ENCODE measurements at regions of chr2 and their contacts with region 1.

Region 1: DNA sequence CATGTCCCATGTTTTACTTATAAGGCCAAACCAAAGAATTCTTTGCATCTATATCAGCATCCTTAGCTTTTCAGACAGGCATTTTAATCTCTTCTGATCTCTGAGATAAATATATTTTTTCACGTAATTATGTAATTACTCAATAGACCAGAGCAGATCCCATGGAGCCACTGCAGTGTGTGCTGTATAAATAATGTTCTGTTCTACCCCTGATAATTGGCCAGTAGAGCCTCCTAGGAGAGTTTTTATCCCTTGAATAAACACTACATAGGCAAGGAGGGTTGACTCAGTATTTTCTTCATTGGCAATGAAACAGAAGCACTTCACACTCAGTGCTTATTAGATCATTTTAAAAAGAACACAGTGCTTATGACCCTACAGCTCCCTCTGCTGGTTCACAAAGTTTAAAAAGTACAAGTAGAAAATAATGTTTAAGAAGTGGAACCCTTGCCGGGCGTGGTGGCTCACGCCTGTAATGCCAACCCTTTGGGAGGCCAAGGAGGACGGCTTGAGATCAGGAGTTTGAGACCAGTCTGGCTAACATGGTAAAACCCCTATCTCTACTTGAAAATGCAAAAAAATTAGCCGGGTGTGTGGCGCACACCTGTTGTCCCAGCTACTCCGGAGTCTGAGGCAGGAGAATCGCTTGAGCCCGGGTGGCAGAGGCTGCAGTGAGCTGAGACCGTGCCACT is 91.9 kb downstream of the PPP1R1C start:
- DNase-seq: no peak
- ATAC-seq: peak; percentile 83
- H3K4me3 ChIP-seq: no peak overlapping the region
- H3K27ac ChIP-seq: no peak overlapping the region
- H3K4me1 ChIP-seq: no peaks in the 10 kb centered on the region
- H3K27me3 ChIP-seq: no peaks in the 10 kb centered on the region; a peak in 1 of 4 replicates
- CTCF ChIP-seq: peak; percentile 40 to 59 (median 58); a peak in 5 of 6 replicates
- EP300 ChIP-seq: no peak
- POLR2A ChIP-seq: no peak
- RAD21 ChIP-seq: peak; percentile 86

Region 2: DNA sequence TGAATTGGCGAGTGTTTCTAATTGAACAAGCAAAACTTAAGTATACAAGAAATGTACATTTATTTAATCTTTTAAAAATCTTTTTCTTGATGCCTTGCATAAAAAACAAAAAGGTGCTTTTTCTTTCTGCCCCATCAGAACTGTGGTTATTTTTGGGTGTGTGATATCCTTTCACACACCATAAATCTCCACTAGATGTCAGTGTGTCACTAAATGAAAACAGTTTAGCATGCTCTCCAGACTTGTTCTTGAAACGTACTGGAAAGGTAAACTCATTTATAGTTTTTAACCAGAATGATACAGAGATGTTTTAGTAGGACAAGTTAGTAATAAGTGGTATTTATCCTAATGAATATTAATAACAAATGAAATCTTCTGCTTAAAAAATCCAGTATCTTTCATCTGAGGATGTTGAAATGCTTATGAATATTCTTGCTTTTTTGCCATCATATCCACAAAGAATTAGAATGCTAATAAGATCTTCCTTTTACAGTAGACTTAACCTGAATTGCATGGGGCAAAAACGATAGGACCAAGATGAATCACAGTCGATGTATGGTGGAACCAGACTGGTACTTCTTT is 1000.4 kb before region 1 on chr2:
- CTCF ChIA-PET with region 1: no interaction called
- POLR2A ChIA-PET with region 1: no interaction called
- RAD21 ChIA-PET with region 1: no interaction called
- SMC1A ChIA-PET with region 1: no interaction called
- in situ Hi-C with region 1: no loop called
- intact Hi-C with region 1: loop called (anchors 5 kb)
- DNase-seq: peak; percentile 16
- ATAC-seq: peak; percentile 94
- H3K4me3 ChIP-seq: no peak overlapping the region
- H3K27ac ChIP-seq: no peak overlapping the region
- H3K4me1 ChIP-seq: no peaks in the 10 kb centered on the region
- H3K27me3 ChIP-seq: no peaks in the 10 kb centered on the region
- CTCF ChIP-seq: peak; percentile 60 to 71 (median 65)
- EP300 ChIP-seq: no peak
- POLR2A ChIP-seq: no peak
- RAD21 ChIP-seq: peak; percentile 93

Region 3: GRCh38 chr2:181742922-181743722 is 334.5 kb before region 1 on chr2:
- CTCF ChIA-PET with region 1: interaction called, 29 read pairs
- POLR2A ChIA-PET with region 1: no interaction called
- RAD21 ChIA-PET with region 1: interaction called, 16 read pairs
- SMC1A ChIA-PET with region 1: interaction called, 23 read pairs
- in situ Hi-C with region 1: loop called (anchors 5 kb)
- intact Hi-C with region 1: loop called (anchors 1 kb)
- DNase-seq: peak; percentile 17
- ATAC-seq: peak; percentile 58
- H3K4me3 ChIP-seq: no peak overlapping the region
- H3K27ac ChIP-seq: no peak overlapping the region
- H3K4me1 ChIP-seq: no peaks in the 10 kb centered on the region
- H3K27me3 ChIP-seq: no peaks in the 10 kb centered on the region
- CTCF ChIP-seq: peak; percentile 47 to 72 (median 53); a peak in 5 of 6 replicates
- EP300 ChIP-seq: no peak
- POLR2A ChIP-seq: no peak
- RAD21 ChIP-seq: peak; percentile 83

Region 4: GRCh38 chr2:181953881-181954537 is 123.6 kb before region 1 on chr2:
- CTCF ChIA-PET with region 1: interaction called, 35 read pairs
- POLR2A ChIA-PET with region 1: no interaction called
- RAD21 ChIA-PET with region 1: interaction called, 3 read pairs
- SMC1A ChIA-PET with region 1: interaction called, 18 read pairs
- in situ Hi-C with region 1: no loop called
- intact Hi-C with region 1: no loop called
- DNase-seq: peak; percentile 19
- ATAC-seq: peak; percentile 92
- H3K4me3 ChIP-seq: no peak overlapping the region
- H3K27ac ChIP-seq: no peak overlapping the region
- H3K4me1 ChIP-seq: no peaks in the 10 kb centered on the region
- H3K27me3 ChIP-seq: no peaks in the 10 kb centered on the region
- CTCF ChIP-seq: peak; percentile 63 to 69 (median 66)
- EP300 ChIP-seq: no peak
- POLR2A ChIP-seq: no peak
- RAD21 ChIP-seq: peak; percentile 57

Region 5: GRCh38 chr2:181959508-181959907 is 118.1 kb before region 1 on chr2:
- CTCF ChIA-PET with region 1: interaction called, 35 read pairs
- POLR2A ChIA-PET with region 1: no interaction called
- RAD21 ChIA-PET with region 1: interaction called, 3 read pairs
- SMC1A ChIA-PET with region 1: interaction called, 18 read pairs
- in situ Hi-C with region 1: loop called (anchors 5 kb)
- intact Hi-C with region 1: no loop called
- DNase-seq: no peak
- ATAC-seq: no peak
- H3K4me3 ChIP-seq: no peak overlapping the region
- H3K27ac ChIP-seq: no peak overlapping the region
- H3K4me1 ChIP-seq: no peaks in the 10 kb centered on the region
- H3K27me3 ChIP-seq: no peaks in the 10 kb centered on the region
- CTCF ChIP-seq: no peak
- EP300 ChIP-seq: no peak
- POLR2A ChIP-seq: no peak
- RAD21 ChIP-seq: no peak

Region 6: GRCh38 chr2:181970160-181970794 is 107.3 kb before region 1 on chr2:
- CTCF ChIA-PET with region 1: interaction called, 7 read pairs
- POLR2A ChIA-PET with region 1: no interaction called
- RAD21 ChIA-PET with region 1: interaction called, 5 read pairs
- SMC1A ChIA-PET with region 1: no interaction called
- in situ Hi-C with region 1: no loop called
- intact Hi-C with region 1: loop called (anchors 2 kb)
- DNase-seq: no peak
- ATAC-seq: no peak
- H3K4me3 ChIP-seq: no peak overlapping the region
- H3K27ac ChIP-seq: no peak overlapping the region
- H3K4me1 ChIP-seq: no peaks in the 10 kb centered on the region
- H3K27me3 ChIP-seq: no peaks in the 10 kb centered on the region
- CTCF ChIP-seq: peak in 2 of 3 experiments; percentile 16 to 22; a peak in 2 of 6 replicates
- EP300 ChIP-seq: no peak
- POLR2A ChIP-seq: no peak
- RAD21 ChIP-seq: peak; percentile 51

Region 7: DNA sequence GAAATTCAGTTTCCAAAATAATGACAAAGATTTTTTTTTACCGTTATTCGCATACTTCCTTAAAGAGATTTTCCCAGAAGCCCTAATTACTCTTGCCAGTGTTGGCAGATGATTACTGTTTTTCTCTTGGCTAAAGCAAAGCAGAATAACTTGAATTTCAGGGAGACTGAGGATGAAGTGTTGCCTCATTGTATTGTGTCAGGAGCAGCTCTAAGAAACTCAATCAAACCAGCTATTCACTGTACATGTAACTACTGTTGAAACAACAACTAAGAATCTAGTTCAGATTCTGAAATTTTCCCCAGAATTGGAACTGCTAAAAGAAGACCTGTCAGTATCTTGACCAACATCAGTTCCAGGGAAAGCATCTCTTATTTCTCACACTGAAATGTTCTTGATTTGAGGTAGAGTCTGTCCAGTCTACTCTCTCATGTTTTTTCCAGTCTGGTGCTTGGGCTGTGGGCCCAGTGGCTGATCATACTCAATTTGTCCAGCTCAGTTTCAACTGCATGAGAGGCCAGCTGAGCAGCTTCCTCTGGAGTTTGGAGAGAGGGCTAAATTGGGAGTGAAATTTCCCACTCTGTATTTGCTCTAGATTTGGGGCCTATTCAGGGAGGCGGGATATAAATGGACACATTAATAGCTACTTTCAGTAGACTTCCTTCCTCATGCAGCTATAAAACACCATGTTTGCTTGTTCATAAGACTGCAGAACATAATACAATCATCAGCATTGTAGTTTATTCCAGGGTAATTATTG is 13.4 kb before region 1 on chr2:
- CTCF ChIA-PET with region 1: interaction called, 13 read pairs
- POLR2A ChIA-PET with region 1: no interaction called
- RAD21 ChIA-PET with region 1: no interaction called
- SMC1A ChIA-PET with region 1: interaction called, 7 read pairs
- in situ Hi-C with region 1: no loop called
- intact Hi-C with region 1: no loop called
- DNase-seq: no peak
- ATAC-seq: no peak
- H3K4me3 ChIP-seq: no peak overlapping the region
- H3K27ac ChIP-seq: no peak overlapping the region
- H3K4me1 ChIP-seq: no peaks in the 10 kb centered on the region
- H3K27me3 ChIP-seq: no peaks in the 10 kb centered on the region; a peak in 1 of 4 replicates
- CTCF ChIP-seq: no peak
- EP300 ChIP-seq: no peak
- POLR2A ChIP-seq: no peak
- RAD21 ChIP-seq: no peak

Measured in GM12878 (cell line).